ENCODE measurements at regions of chr15 and their contacts with region 1.

Region 1: GRCh38 chr15:65054333-65055200 is 9.4 kb downstream of the SLC51B start:
- DNase-seq: peak; percentile 77
- H3K4me3 ChIP-seq: no peak overlapping the region
- H3K27ac ChIP-seq: peak overlapping the region; percentile 71
- H3K4me1 ChIP-seq: peaks cover 47% of the 10 kb centered on the region
- H3K27me3 ChIP-seq: no peaks in the 10 kb centered on the region
- CTCF ChIP-seq: peak; percentile 96

Region 2: DNA sequence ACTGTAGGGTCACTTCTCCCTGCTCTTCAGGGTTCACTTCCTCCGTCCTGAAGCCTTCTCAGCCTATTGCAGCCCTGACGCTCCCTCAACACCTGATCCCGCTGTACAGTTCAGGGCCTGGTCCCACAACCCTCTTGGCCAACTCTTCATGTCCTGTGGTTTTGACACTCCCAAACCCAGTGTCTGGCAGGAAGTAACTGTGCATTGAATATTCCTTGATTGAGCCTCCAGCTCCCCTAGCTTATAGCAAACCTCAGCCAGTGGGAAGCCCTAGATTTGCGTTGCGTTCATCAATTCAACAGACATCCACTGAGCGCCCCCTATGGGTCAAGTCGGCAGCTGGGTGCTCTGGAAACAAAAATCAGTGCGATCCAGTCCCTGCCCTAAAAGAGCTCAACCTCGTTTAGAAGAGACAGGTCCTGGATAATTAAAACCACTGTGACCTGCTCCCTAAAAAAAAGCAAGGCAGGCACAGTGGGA is 46.9 kb after region 1 on chr15:
- intact Hi-C with region 1: loop called (anchors 10 kb)
- DNase-seq: peak; percentile 58
- H3K4me3 ChIP-seq: no peak overlapping the region
- H3K27ac ChIP-seq: no peak overlapping the region
- H3K4me1 ChIP-seq: peaks cover 5% of the 10 kb centered on the region
- H3K27me3 ChIP-seq: no peaks in the 10 kb centered on the region
- CTCF ChIP-seq: peak; percentile 82